ENCODE measurements at regions of chr7 and their contacts with region 1.

Region 1: GRCh38 chr7:44980393-44981034 is 1.7 kb upstream of the MYO1G start:
- DNase-seq: peak; percentile 56
- ATAC-seq: peak; percentile 63
- H3K4me3 Mint-ChIP-seq: peak overlapping the region; percentile 74
- H3K27ac Mint-ChIP-seq: peak overlapping the region; percentile 92
- H3K4me1 Mint-ChIP-seq: peaks cover 86% of the 10 kb centered on the region
- H3K27me3 Mint-ChIP-seq: no peaks in the 10 kb centered on the region
- CTCF ChIP-seq: no peak

Region 2: GRCh38 chr7:44805950-44806349 is 174.6 kb before region 1 on chr7:
- CTCF ChIA-PET with region 1: no interaction called
- POLR2A ChIA-PET with region 1: no interaction called
- intact Hi-C with region 1: no loop called
- DNase-seq: no peak
- ATAC-seq: no peak
- H3K4me3 Mint-ChIP-seq: no peak overlapping the region
- H3K27ac Mint-ChIP-seq: no peak overlapping the region
- H3K4me1 Mint-ChIP-seq: peaks cover 7% of the 10 kb centered on the region
- H3K27me3 Mint-ChIP-seq: no peaks in the 10 kb centered on the region
- CTCF ChIP-seq: no peak

Region 3: GRCh38 chr7:45007571-45008328 is 27.2 kb after region 1 on chr7:
- CTCF ChIA-PET with region 1: no interaction called
- POLR2A ChIA-PET with region 1: interaction called, 325 read pairs
- intact Hi-C with region 1: no loop called
- DNase-seq: no peak
- ATAC-seq: peak; percentile 75
- H3K4me3 Mint-ChIP-seq: peak overlapping the region; percentile 41
- H3K27ac Mint-ChIP-seq: peak overlapping the region; percentile 70
- H3K4me1 Mint-ChIP-seq: peaks cover 54% of the 10 kb centered on the region
- H3K27me3 Mint-ChIP-seq: no peaks in the 10 kb centered on the region
- CTCF ChIP-seq: no peak

Region 4: DNA sequence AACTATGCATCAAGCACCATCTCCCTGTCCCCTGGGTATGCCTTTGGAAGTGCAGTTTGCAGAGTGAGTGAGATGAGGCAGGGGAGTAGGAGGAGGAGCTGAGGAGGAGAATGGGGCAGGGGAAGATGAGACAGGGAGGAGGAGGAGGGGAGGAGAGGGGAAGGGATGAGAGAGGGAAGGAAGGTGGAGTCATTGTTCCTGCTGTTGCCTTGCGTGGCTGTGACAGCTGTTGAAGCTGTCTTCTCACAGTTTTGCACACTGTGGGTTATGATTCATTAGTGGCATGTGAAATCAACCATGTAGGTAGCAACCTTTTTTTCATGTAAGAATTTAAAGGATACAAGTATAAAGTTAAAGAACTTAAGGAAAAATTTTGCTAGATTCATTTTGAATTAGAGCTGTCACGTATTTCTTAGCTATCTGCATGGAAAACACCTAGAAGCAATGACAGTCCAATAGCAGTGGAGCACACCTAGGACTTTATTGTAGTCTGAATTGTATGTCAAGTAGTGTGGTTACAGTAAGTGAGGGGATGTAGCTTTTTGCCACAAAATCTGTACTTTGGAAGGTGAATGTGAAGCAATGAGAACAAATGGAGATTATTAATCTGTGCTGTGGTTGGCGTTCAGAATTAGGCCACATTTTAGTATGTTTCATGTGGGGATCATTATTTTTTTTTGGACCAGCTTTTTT is 41.2 kb after region 1 on chr7:
- CTCF ChIA-PET with region 1: no interaction called
- POLR2A ChIA-PET with region 1: interaction called, 105 read pairs
- intact Hi-C with region 1: no loop called
- DNase-seq: no peak
- ATAC-seq: peak; percentile 79
- H3K4me3 Mint-ChIP-seq: peak overlapping the region; percentile 13
- H3K27ac Mint-ChIP-seq: peak overlapping the region; percentile 82
- H3K4me1 Mint-ChIP-seq: peaks cover 53% of the 10 kb centered on the region
- H3K27me3 Mint-ChIP-seq: no peaks in the 10 kb centered on the region
- CTCF ChIP-seq: no peak

Measured in activated B cell treated with CpG ODN at 0.5 μM for 24 hours (primary cell).